Activated CD8-positive, alpha-beta memory T cell treated with anti-CD3 and anti-CD28 coated beads, Interleukin-2, amount 10 ng/mL, durations not matched to agents 7 days and 5 days (primary cell): ENCODE measurements at regions of chr1 and their contacts with region 1.

Region 1: DNA sequence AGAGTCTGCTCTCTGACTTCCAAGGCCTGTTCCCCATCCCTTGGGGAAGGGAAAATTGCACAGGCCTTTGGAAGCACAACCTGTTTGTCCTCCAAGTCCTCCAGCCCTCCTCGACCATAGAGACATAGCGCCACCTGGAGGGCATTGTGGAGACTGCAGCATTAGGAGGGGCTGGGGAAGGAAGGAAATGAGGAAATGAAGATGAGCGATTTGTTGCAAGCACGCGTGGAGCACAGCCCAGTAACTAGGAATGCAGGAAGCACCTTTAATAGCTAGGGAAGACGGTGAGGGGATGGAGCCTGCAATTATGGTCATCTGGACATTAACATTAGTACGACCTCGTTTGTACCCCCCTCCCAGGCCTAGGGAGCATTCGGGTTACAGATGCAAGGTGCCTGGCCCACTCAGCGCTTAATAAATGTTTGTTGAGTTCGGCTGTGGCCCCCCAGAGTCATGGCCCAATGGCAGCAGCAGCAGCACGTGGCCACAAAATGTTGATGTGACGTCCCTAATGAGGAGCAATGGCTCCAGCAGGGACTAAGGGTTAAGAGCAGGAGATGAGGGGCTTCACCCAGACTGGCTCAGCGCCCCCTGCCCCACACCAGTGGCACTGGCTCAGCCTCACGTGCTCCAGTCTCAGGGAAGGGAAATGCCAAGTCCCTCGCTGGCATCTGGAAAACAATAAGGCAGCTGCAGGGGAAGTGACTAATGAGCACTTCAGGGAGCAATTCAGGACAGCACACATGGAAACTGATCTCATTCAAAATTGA is 8.0 kb upstream of the CAMK2N1 start:
- DNase-seq: peak; percentile 85
- ATAC-seq: peak; percentile 77
- H3K4me3 Mint-ChIP-seq: no peak overlapping the region
- H3K27ac Mint-ChIP-seq: no peak overlapping the region
- H3K4me1 Mint-ChIP-seq: peaks cover 11% of the 10 kb centered on the region
- H3K27me3 Mint-ChIP-seq: peaks cover 20% of the 10 kb centered on the region

Region 2: GRCh38 chr1:20361806-20362640 is 132.0 kb before region 1 on chr1:
- CTCF ChIA-PET with region 1: interaction called, 18 read pairs
- DNase-seq: no peak
- ATAC-seq: no peak
- H3K4me3 Mint-ChIP-seq: no peak overlapping the region
- H3K27ac Mint-ChIP-seq: no peak overlapping the region
- H3K4me1 Mint-ChIP-seq: peaks cover 5% of the 10 kb centered on the region
- H3K27me3 Mint-ChIP-seq: peaks cover 65% of the 10 kb centered on the region

Region 3: GRCh38 chr1:20376880-20377494 is 117.0 kb before region 1 on chr1:
- CTCF ChIA-PET with region 1: interaction called, 21 read pairs
- DNase-seq: peak; percentile 62
- ATAC-seq: peak; percentile 53
- H3K4me3 Mint-ChIP-seq: no peak overlapping the region
- H3K27ac Mint-ChIP-seq: no peak overlapping the region
- H3K4me1 Mint-ChIP-seq: no peaks in the 10 kb centered on the region
- H3K27me3 Mint-ChIP-seq: peaks cover 32% of the 10 kb centered on the region

Region 4: DNA sequence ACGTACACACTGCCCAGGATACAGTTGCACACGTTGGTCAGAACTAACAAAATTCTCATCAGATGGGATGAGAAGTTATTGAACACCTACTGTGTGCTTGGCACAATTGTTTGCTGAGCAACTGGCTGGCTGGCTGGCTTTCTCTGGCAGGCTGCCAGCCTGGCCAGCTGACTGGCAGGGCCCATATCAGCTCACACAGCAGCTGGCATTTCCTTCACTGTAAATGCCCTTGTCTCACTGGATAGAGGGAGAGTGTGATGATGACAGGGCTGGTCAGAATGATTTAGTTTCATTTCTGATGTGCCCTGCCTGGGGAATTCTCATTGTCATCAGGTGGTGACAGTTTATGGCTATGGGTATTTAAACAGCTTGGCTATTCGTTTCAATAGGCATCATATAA is 23.8 kb before region 1 on chr1:
- CTCF ChIA-PET with region 1: interaction called, 13 read pairs
- DNase-seq: no peak
- ATAC-seq: no peak
- H3K4me3 Mint-ChIP-seq: no peak overlapping the region
- H3K27ac Mint-ChIP-seq: no peak overlapping the region
- H3K4me1 Mint-ChIP-seq: no peaks in the 10 kb centered on the region
- H3K27me3 Mint-ChIP-seq: peaks cover 50% of the 10 kb centered on the region

Region 5: DNA sequence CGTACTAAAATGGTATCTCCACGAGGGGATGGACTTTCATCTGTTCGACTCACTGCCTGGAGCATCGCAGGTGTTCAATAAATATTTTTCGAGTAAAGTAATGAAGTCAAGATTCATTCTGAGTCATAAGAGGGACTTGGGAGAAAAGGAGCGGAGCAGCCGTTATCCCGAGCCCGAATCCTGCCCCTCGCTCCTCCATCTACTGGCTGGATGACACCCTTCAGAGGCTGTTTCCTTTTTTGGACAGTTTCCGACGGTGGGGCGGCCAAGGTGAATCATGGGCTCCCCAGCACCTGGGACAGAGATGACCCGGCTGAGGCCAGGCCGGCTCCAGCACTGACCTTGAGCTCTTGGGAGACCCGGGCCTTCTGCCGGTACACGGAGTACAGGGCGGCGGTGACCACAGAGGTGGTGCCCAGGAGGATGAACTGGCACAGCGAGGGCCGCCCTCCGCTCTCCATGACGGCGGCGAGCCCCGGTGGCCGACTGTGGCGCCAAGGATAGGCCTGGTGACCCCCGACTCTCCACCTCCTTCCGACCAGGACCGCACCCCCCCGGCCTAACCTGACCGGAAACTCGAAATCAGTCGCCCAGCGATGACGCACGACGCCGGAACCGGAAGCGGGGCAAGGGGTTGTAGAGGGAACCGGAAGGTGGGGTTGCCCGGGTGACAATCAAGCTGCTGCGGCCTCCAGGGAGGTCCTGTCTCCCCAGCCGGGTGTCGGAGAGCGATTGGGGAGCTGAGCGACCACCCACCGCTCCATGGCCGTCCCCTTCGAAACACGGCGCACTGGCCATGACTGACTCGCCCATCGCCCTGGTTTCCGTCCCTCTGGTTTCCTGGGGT is 13.8 kb after region 1 on chr1 and contains the start of gene MUL1:
- CTCF ChIA-PET with region 1: interaction called, 17 read pairs
- DNase-seq: peak; percentile 97
- ATAC-seq: peak; percentile 97
- H3K4me3 Mint-ChIP-seq: peak within 1 kb of the TSS; percentile 87
- H3K27ac Mint-ChIP-seq: peak within 1 kb of the TSS; percentile 87
- H3K4me1 Mint-ChIP-seq: peaks cover 22% of the 10 kb centered on the region
- H3K27me3 Mint-ChIP-seq: no peaks in the 10 kb centered on the region
- total RNA-seq, gene MUL1: 14.9 to 19.5 TPM